Prostate gland (tissue), 2 donors: ENCODE measurements at regions of chr3 and their contacts with region 1.

Region 1: GRCh38 chr3:20984594-20985205 is 766.3 kb downstream of the ZNF385D start:
- DNase-seq: no peak
- H3K4me3 ChIP-seq: no peak overlapping the region
- H3K27ac ChIP-seq: no peak overlapping the region
- H3K4me1 ChIP-seq: no peaks in the 10 kb centered on the region
- H3K27me3 ChIP-seq: no peaks in the 10 kb centered on the region
- CTCF ChIP-seq: no peak
- POLR2A ChIP-seq: no peak

Region 2: DNA sequence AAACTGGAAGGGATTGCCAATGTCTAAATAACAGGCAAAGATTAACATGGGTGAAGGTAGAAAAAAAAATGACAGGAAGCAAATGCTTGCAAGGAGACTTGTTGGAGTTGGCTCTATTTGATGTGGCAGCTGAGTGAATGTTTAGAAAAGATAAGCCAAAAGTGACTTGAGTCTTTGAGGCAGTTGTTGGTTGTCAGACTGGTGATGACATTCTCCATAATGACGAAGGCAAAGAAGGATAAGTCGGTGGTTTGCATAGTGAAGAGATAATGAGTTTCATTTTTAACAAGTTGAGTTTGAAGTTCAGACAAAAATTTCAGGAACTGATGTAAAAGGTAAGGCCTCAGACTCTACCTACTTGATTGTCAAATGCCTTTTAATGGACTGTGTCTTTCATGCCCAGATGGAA is 94.6 kb before region 1 on chr3:
- intact Hi-C with region 1: no loop called
- DNase-seq: no peak
- H3K4me3 ChIP-seq: no peak overlapping the region
- H3K27ac ChIP-seq: no peak overlapping the region
- H3K4me1 ChIP-seq: no peaks in the 10 kb centered on the region
- H3K27me3 ChIP-seq: no peaks in the 10 kb centered on the region
- CTCF ChIP-seq: no peak
- POLR2A ChIP-seq: no peak

Region 3: GRCh38 chr3:21059404-21059803 is 74.7 kb after region 1 on chr3:
- intact Hi-C with region 1: loop called (anchors 10 kb)
- DNase-seq: no peak
- H3K4me3 ChIP-seq: no peak overlapping the region
- H3K27ac ChIP-seq: no peak overlapping the region
- H3K4me1 ChIP-seq: no peaks in the 10 kb centered on the region
- H3K27me3 ChIP-seq: no peaks in the 10 kb centered on the region
- CTCF ChIP-seq: no peak
- POLR2A ChIP-seq: no peak